Caco-2 (cell line): ENCODE measurements at regions of chr1 and their contacts with region 1.

Region 1: GRCh38 chr1:23344111-23344986 is at the start of gene HNRNPR:
- DNase-seq: peak; percentile 99 to 100
- H3K4me3 ChIP-seq: peak within 1 kb of the TSS; percentile 70
- H3K4me3 Mint-ChIP-seq: peak within 1 kb of the TSS; percentile 96
- H3K27ac Mint-ChIP-seq: peak within 1 kb of the TSS; percentile 98
- H3K4me1 ChIP-seq: peaks cover 19% of the 10 kb centered on the region
- H3K4me1 Mint-ChIP-seq: peaks cover 23% of the 10 kb centered on the region
- H3K27me3 ChIP-seq: no peaks in the 10 kb centered on the region
- H3K27me3 Mint-ChIP-seq: no peaks in the 10 kb centered on the region
- CTCF ChIP-seq: peak in 1 of 2 experiments; percentile 7
- total RNA-seq, gene HNRNPR: 169 and 183 TPM in 2 replicates

Region 2: GRCh38 chr1:23222742-23223141 is 121.6 kb before region 1 on chr1:
- CTCF ChIA-PET with region 1: no interaction called
- POLR2A ChIA-PET with region 1: interaction called, 14 read pairs
- intact Hi-C with region 1: no loop called
- DNase-seq: no peak
- H3K4me3 ChIP-seq: no peak overlapping the region
- H3K4me3 Mint-ChIP-seq: no peak overlapping the region
- H3K27ac Mint-ChIP-seq: no peak overlapping the region
- H3K4me1 ChIP-seq: peaks cover 10% of the 10 kb centered on the region; the same call in 1 of the 2 replicates
- H3K4me1 Mint-ChIP-seq: peaks cover 6% of the 10 kb centered on the region
- H3K27me3 ChIP-seq: no peaks in the 10 kb centered on the region
- H3K27me3 Mint-ChIP-seq: no peaks in the 10 kb centered on the region
- CTCF ChIP-seq: no peak

Region 3: DNA sequence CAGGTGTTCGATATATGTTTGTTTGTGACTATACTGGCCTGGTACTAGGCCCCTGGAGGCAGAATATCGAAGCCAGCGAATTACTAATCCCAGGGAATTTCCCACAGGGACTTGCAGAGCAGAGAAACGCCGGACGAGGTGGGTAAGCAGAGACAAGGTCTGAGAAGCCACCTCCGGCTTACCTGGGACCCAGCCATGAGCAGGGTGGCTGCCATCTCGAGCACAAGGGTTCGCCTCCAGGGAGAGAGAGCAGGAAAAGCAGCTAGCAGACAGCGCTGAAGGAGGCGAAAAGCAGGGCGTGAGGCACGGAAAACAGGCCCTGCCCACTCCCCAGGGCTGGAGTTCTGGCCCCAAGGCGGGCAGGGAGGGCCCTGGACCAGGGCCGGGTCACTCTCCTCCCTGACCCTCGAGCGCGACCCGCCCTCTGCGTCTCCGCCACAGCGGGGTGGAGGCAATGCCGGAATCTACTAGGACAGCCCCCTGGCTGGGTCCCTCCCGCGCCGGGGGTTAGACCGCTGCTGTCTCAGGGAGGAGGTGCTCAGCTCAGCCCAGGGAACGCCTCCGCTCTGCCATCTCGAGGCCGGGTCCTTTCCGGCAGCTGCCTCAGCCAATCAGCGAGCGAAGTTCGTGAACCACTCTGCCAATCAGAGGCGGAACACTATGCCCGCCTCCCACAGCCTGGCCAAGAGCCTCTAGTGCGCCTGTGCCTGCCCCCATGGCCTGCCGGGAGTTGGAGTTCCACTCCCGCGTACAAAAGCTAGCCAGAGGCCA is 23.6 kb after region 1 on chr1:
- CTCF ChIA-PET with region 1: interaction called, 15 read pairs
- POLR2A ChIA-PET with region 1: interaction called, 45 read pairs
- intact Hi-C with region 1: loop called (anchors 1 kb)
- DNase-seq: peak; percentile 98
- H3K4me3 ChIP-seq: peak overlapping the region; percentile 73
- H3K4me3 Mint-ChIP-seq: peak overlapping the region; percentile 80
- H3K27ac Mint-ChIP-seq: peak overlapping the region; percentile 85
- H3K4me1 ChIP-seq: peaks cover 22% of the 10 kb centered on the region
- H3K4me1 Mint-ChIP-seq: no peaks in the 10 kb centered on the region
- H3K27me3 ChIP-seq: no peaks in the 10 kb centered on the region
- H3K27me3 Mint-ChIP-seq: no peaks in the 10 kb centered on the region
- CTCF ChIP-seq: no peak

Region 4: DNA sequence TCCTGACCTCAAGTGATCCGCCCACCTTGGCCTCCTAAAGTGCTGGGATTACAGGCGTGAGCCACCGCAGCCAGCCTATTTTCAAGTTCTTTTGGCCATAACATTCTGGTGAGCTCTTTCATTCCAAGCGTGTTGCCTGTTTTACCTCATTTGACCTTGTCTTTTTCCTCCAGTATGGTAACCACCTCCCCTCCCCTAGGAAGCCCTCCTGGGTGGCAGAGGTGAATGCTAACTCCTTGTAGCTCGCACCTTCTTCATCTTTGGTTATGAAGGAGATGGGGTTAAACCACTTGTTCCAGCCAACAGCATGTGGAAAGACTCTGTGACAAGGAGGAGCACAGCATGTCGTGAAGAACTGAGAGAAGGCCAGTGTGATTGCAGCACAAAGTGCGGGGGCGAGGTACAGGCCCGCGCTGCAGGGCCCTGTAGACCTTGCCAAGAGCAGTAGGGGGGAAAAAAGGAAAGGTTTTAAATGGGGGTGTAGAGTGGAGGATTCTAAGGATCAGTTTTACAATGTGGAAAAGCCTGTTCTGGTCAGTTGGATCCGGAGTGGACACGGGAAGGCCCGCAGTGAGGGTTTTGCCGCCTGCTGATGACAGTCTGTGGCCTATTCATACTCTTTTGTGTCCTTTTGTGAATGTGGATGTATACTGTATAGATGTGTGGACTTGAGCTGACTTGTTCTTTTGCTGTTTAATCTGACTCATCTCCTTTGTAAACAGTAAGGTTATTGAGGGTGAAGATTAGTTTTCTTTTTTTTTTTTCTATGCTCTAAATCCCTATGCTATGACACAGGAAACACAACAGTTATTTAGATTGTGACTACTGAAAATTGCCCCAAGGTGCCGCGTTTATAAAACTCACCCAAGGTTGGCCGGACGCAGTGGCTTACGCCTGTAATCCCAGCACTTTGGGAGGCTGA is 32.8 kb after region 1 on chr1:
- CTCF ChIA-PET with region 1: interaction called, 3 read pairs
- POLR2A ChIA-PET with region 1: interaction called, 11 read pairs
- intact Hi-C with region 1: no loop called
- DNase-seq: peak in 1 of 2 experiments; percentile 32
- H3K4me3 ChIP-seq: no peak overlapping the region
- H3K4me3 Mint-ChIP-seq: peak overlapping the region; percentile 17
- H3K27ac Mint-ChIP-seq: peak overlapping the region; percentile 48
- H3K4me1 ChIP-seq: peaks cover 6% of the 10 kb centered on the region
- H3K4me1 Mint-ChIP-seq: peaks cover 26% of the 10 kb centered on the region
- H3K27me3 ChIP-seq: no peaks in the 10 kb centered on the region
- H3K27me3 Mint-ChIP-seq: no peaks in the 10 kb centered on the region
- CTCF ChIP-seq: no peak

Region 5: GRCh38 chr1:23403735-23404486 is 59.6 kb after region 1 on chr1:
- CTCF ChIA-PET with region 1: interaction called, 8 read pairs
- POLR2A ChIA-PET with region 1: interaction called, 9 read pairs
- intact Hi-C with region 1: loop called (anchors 10 kb)
- DNase-seq: peak; percentile 80 to 84
- H3K4me3 ChIP-seq: peak overlapping the region; percentile 21; the same call in 1 of the 2 replicates
- H3K4me3 Mint-ChIP-seq: peak overlapping the region; percentile 64
- H3K27ac Mint-ChIP-seq: no peak overlapping the region
- H3K4me1 ChIP-seq: 0 out of 2 replicates have a peak, but pooled peaks cover 7% of the 10 kb centered on the region
- H3K4me1 Mint-ChIP-seq: peaks cover 8% of the 10 kb centered on the region
- H3K27me3 ChIP-seq: no peaks in the 10 kb centered on the region
- H3K27me3 Mint-ChIP-seq: no peaks in the 10 kb centered on the region
- CTCF ChIP-seq: peak; percentile 77 to 79

Region 6: GRCh38 chr1:23539698-23540266 is 195.4 kb after region 1 on chr1:
- CTCF ChIA-PET with region 1: interaction called, 5 read pairs
- POLR2A ChIA-PET with region 1: interaction called, 6 read pairs
- intact Hi-C with region 1: loop called (anchors 10 kb)
- DNase-seq: peak; percentile 92
- H3K4me3 ChIP-seq: no peak overlapping the region
- H3K4me3 Mint-ChIP-seq: peak overlapping the region; percentile 44
- H3K27ac Mint-ChIP-seq: no peak overlapping the region
- H3K4me1 ChIP-seq: no peaks in the 10 kb centered on the region
- H3K4me1 Mint-ChIP-seq: no peaks in the 10 kb centered on the region
- H3K27me3 ChIP-seq: no peaks in the 10 kb centered on the region
- H3K27me3 Mint-ChIP-seq: no peaks in the 10 kb centered on the region
- CTCF ChIP-seq: peak; percentile 76 to 86

Region 7: DNA sequence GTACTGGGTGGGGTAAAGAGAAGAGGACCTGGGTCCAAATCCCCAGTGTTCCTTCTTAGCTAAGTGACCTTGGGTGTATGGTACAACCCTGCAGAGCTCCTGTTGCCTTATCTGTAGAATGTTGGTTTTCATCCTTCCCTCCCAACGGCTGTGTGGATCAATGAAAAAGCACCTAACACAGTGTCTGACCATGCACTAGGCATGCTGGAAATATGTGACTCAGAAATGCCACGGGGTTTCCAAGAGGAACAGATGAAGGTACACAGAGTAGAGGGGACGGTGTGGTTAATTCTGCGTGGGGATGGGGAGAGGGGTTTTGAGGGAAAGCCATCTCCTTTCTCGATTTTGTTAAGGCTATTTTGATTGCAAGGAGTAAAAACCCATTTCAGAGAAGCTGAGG is 1079.9 kb after region 1 on chr1:
- CTCF ChIA-PET with region 1: no interaction called
- POLR2A ChIA-PET with region 1: interaction called, 10 read pairs
- intact Hi-C with region 1: no loop called
- DNase-seq: no peak
- H3K4me3 ChIP-seq: no peak overlapping the region
- H3K4me3 Mint-ChIP-seq: no peak overlapping the region
- H3K27ac Mint-ChIP-seq: no peak overlapping the region
- H3K4me1 ChIP-seq: no peaks in the 10 kb centered on the region
- H3K4me1 Mint-ChIP-seq: no peaks in the 10 kb centered on the region
- H3K27me3 ChIP-seq: no peaks in the 10 kb centered on the region
- H3K27me3 Mint-ChIP-seq: no peaks in the 10 kb centered on the region
- CTCF ChIP-seq: no peak